Dendritic cell treated with granulocyte-macrophage colony-stimulating factor and Interleukin-4, amounts not matched to agents 40 ng/mL and 50 ng/mL, for 4 days (primary cell): ENCODE measurements at regions of chr9 and their contacts with region 1.

Region 1: DNA sequence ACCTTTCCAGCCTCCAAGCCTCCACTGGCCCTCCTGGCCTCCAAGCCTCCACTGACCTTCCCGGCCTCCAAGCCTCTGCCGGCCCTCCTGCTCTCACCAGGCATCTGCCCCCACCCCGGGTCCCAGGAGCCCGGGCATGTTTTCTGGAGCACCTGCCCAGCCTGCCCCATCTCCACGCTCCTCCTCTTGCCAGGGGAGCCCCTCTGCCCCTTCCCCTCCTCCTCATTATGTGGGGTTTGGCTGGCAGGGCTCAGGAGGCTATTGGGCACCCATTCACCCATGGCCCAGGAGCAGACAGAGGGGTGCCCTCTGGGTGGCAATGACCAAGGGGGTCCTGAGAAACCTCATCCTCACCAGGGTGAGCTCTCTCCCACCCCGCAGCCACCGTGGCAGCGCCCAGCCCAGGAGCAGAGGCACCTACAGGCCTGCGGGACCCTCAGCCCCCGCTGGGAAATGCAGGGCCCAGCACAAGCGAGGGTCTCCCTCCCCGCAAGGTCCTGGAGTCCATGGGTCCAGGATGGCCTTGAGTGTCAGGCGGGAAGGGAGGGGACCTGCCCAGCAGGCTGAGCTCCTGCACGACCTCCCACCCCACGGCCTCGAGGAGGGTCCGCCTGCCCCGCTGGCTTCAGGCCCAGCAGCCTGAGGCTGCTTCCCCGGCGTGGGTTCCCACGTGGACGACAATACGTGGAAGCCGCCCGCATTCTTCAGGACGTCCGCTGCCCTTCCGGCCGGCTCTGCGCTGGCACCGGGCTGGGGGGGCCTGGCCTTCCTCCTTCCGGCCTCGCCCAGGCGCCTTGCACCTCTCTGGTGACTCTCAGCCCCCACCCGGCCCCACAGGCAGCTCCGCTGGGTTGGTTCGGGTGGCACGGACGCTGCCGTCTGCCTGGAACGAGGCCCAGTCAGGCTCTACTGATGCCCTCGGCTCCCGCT is 51.4 kb upstream of the NRARP start:
- H3K4me3 Mint-ChIP-seq: no peak overlapping the region
- H3K27ac Mint-ChIP-seq: no peak overlapping the region
- H3K4me1 Mint-ChIP-seq: no peaks in the 10 kb centered on the region
- H3K27me3 Mint-ChIP-seq: no peaks in the 10 kb centered on the region

Region 2: GRCh38 chr9:137715321-137715720 is 361.8 kb after region 1 on chr9:
- intact Hi-C with region 1: loop called (anchors 10 kb)
- H3K4me3 Mint-ChIP-seq: no peak overlapping the region
- H3K27ac Mint-ChIP-seq: no peak overlapping the region
- H3K4me1 Mint-ChIP-seq: no peaks in the 10 kb centered on the region
- H3K27me3 Mint-ChIP-seq: no peaks in the 10 kb centered on the region